Activated naive CD4-positive, alpha-beta T cell treated with anti-CD3 and anti-CD28 coated beads for 36 hours (primary cell): ENCODE measurements at regions of chr14 and their contacts with region 1.

Region 1: GRCh38 chr14:39432179-39432618 is at the start of gene FBXO33:
- DNase-seq: peak; percentile 96
- H3K4me3 Mint-ChIP-seq: peak within 1 kb of the TSS; percentile 100
- H3K27ac Mint-ChIP-seq: peak within 1 kb of the TSS; percentile 100
- H3K4me1 Mint-ChIP-seq: peaks cover 35% of the 10 kb centered on the region
- H3K27me3 Mint-ChIP-seq: no peaks in the 10 kb centered on the region
- total RNA-seq, gene FBXO33: 16.1 to 16.4 TPM

Region 2: GRCh38 chr14:39102969-39103957 is 328.9 kb before region 1 on chr14 and contains the start of gene SEC23A:
- CTCF ChIA-PET with region 1: interaction called, 6 read pairs
- intact Hi-C with region 1: loop called (anchors 1 kb)
- DNase-seq: peak; percentile 87
- H3K4me3 Mint-ChIP-seq: peak within 1 kb of the TSS; percentile 87
- H3K27ac Mint-ChIP-seq: peak within 1 kb of the TSS; percentile 96
- H3K4me1 Mint-ChIP-seq: peaks cover 42% of the 10 kb centered on the region
- H3K27me3 Mint-ChIP-seq: no peaks in the 10 kb centered on the region
- total RNA-seq, gene SEC23A: 40.2 to 48.0 TPM

Region 3: DNA sequence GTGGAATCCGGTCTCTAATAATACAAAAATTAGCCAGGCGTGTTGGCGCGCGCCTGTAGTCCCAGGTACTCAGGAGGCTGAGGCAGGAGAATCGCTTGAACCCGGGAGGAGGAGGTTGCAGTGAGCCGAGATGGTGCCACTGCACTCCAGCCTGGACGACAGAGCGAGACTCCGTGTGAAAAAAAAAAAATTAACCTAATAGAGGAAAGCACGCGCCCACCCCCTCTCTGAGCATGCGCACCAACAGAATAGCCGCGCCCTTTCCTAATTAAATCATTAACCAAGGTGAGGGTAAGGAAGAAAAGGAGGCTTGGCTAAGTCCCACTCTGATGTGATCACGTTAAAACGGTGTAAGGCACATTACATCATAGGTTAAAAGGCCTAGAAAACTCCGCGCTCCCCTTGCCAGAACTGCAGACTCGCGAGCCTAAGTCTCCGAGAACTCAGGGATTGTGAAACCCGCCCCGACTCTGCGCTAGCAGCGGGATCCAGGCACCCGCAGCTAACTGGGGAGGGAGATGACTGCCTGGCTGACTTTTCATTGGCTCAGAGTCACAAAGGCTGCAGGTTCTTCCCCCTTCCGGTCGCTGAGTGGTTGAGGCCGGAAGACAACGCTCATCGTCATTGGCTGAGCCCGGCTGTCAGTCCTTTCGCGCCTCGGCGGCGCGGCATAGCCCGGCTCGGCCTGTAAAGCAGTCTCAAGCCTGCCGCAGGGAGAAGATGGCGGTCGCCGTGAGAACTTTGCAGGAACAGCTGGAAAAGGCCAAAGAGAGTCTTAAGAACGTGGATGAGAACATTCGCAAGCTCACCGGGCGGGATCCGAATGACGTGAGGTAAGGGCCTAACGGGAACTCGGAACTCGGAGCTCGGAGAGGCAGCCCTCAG is 257.4 kb before region 1 on chr14 and contains the start of gene PNN:
- CTCF ChIA-PET with region 1: interaction called, 4 read pairs
- intact Hi-C with region 1: loop called (anchors 1 kb)
- DNase-seq: peak; percentile 98
- H3K4me3 Mint-ChIP-seq: peak within 1 kb of the TSS; percentile 100
- H3K27ac Mint-ChIP-seq: peak within 1 kb of the TSS; percentile 100
- H3K4me1 Mint-ChIP-seq: peaks cover 44% of the 10 kb centered on the region
- H3K27me3 Mint-ChIP-seq: no peaks in the 10 kb centered on the region
- total RNA-seq, gene PNN: 99.6 to 100 TPM

Region 4: GRCh38 chr14:39266871-39267591 is 165.2 kb before region 1 on chr14:
- CTCF ChIA-PET with region 1: no interaction called
- intact Hi-C with region 1: loop called (anchors 1 kb)
- DNase-seq: peak; percentile 68
- H3K4me3 Mint-ChIP-seq: peak overlapping the region; percentile 72
- H3K27ac Mint-ChIP-seq: peak overlapping the region; percentile 93
- H3K4me1 Mint-ChIP-seq: peaks cover 48% of the 10 kb centered on the region
- H3K27me3 Mint-ChIP-seq: no peaks in the 10 kb centered on the region

Region 5: GRCh38 chr14:39395555-39396254 is 36.5 kb before region 1 on chr14:
- CTCF ChIA-PET with region 1: interaction called, 3 read pairs
- intact Hi-C with region 1: loop called (anchors 1 kb)
- DNase-seq: peak; percentile 26
- H3K4me3 Mint-ChIP-seq: no peak overlapping the region
- H3K27ac Mint-ChIP-seq: peak overlapping the region; percentile 81
- H3K4me1 Mint-ChIP-seq: peaks cover 19% of the 10 kb centered on the region
- H3K27me3 Mint-ChIP-seq: no peaks in the 10 kb centered on the region

Region 6: DNA sequence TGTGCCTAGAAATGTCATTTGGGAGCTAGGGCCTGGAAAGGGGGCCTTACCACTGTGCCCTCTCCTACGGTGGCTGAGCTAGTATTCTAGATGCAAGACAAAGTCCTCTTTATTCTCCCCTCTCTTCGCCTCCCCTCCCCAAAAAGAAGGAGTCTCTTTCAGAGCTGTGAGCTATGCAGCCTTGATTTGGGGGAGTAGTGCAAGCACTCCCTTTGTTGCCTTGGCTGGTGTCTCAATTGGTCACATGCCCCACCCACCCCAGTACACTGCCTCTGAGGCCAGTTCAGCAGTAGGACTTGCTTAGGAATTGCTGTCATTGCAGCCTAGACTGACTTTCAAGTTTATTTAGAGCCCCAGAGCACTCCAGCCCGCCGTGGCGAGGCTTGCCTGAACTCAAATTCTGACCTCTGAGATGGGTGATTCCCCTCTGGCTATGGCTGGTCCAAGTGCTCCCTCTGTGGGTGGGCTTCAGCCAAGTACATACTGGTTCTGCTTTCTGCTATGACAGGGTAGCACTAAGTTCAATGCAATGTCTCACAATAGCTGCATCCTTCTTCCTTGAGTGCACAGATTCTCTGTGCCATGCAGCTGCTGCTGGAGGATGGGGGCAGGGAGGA is 37.0 kb after region 1 on chr14:
- CTCF ChIA-PET with region 1: interaction called, 3 read pairs
- intact Hi-C with region 1: loop called (anchors 2 kb)
- DNase-seq: peak; percentile 70
- H3K4me3 Mint-ChIP-seq: no peak overlapping the region
- H3K27ac Mint-ChIP-seq: no peak overlapping the region
- H3K4me1 Mint-ChIP-seq: no peaks in the 10 kb centered on the region
- H3K27me3 Mint-ChIP-seq: peaks cover 9% of the 10 kb centered on the region

Region 7: DNA sequence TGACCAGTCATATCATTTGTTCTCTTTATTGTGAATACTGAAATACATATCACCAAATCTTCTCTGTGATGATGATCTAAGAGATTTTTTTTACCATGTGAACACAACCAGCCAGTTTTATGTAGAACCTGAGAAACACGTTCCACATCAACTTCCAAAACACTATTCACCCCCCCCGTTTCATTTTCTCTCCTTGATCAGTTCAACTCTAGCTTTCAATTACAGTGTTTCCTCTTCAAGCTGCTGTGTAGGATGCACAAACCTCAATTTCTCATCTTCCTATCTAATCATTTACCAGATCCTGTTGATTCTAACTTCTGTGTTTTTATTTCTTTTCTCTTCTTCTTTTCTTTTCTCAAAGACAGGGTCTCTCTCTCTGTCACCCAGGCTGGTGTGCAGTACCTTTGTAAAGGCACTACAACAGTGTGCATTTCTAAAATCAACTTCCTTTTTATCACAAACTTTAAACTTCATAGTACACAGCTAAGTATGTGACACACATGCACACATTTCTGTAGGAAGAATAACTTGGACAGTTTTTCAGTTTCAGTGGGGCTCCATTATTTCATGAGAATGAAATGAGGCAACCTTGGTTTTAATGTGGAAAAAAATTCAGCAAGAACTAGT is 149.9 kb after region 1 on chr14:
- CTCF ChIA-PET with region 1: no interaction called
- intact Hi-C with region 1: no loop called
- DNase-seq: no peak
- H3K4me3 Mint-ChIP-seq: no peak overlapping the region
- H3K27ac Mint-ChIP-seq: no peak overlapping the region
- H3K4me1 Mint-ChIP-seq: no peaks in the 10 kb centered on the region
- H3K27me3 Mint-ChIP-seq: no peaks in the 10 kb centered on the region

Region 8: GRCh38 chr14:39762576-39763401 is 330.6 kb after region 1 on chr14:
- CTCF ChIA-PET with region 1: no interaction called
- intact Hi-C with region 1: no loop called
- DNase-seq: peak; percentile 30
- H3K4me3 Mint-ChIP-seq: no peak overlapping the region
- H3K27ac Mint-ChIP-seq: no peak overlapping the region
- H3K4me1 Mint-ChIP-seq: peaks cover 8% of the 10 kb centered on the region
- H3K27me3 Mint-ChIP-seq: no peaks in the 10 kb centered on the region